Left ventricle myocardium superior (tissue), 1 donor: ENCODE measurements at regions of chr12 and their contacts with region 1.

Region 1: DNA sequence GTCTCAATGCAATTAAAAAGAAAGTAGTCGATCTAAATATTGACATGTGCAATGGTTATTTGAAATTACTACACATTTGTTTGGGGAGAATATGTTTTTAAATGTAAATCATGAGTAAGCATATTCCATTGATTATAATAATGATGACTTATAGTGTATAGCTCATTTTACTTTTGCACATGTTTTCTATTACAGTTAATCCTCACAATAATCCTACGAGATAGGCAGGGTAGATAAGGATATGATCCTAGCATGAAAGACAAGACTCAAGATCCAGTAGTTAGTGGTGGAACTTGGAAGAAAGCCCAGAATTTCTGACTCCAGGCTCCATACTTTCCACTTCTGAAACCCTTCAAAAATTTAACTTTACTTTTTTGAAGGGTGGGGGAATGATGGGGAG is 94.0 kb downstream of the NAV3 start:
- DNase-seq: no peak
- ATAC-seq: no peak

Region 2: GRCh38 chr12:77724367-77724957 is 200.2 kb before region 1 on chr12:
- intact Hi-C with region 1: loop called (anchors 5 kb)
- DNase-seq: no peak
- ATAC-seq: peak; percentile 74

Region 3: DNA sequence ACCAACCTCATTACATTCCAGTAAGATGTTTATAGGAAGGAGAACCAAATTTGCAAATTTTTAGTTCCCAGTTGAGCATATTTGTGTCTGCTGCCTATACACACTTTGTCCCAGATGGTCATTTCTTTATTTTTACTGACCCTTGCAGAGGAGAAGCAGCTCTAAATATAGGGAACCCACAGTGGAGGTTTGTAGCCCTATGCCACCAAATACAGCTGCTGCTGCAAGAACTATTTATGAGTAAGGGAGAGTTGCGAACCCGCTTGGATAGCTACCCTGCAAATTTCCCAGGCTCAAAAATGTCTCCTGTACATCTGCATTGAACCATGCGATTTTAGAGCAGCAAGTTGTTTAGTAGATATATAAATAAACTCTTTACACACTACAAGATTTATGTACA is 45.8 kb before region 1 on chr12:
- intact Hi-C with region 1: no loop called
- DNase-seq: no peak
- ATAC-seq: no peak

Region 4: GRCh38 chr12:77973579-77973978 is 48.9 kb after region 1 on chr12:
- intact Hi-C with region 1: no loop called
- DNase-seq: no peak
- ATAC-seq: no peak